ENCODE measurements at regions of chr20 and their contacts with region 1.

Region 1: GRCh38 chr20:35711588-35712209 is 12.5 kb downstream of the ROMO1 start:
- DNase-seq: no peak
- H3K4me3 ChIP-seq: no peak overlapping the region
- H3K27ac ChIP-seq: no peak overlapping the region
- H3K27me3 ChIP-seq: no peaks in the 10 kb centered on the region
- CTCF ChIP-seq: no peak

Region 2: GRCh38 chr20:35750611-35751010 is 38.9 kb after region 1 on chr20:
- CTCF ChIA-PET with region 1: interaction called, 10 read pairs
- POLR2A ChIA-PET with region 1: no interaction called
- DNase-seq: no peak
- H3K4me3 ChIP-seq: no peak overlapping the region
- H3K27ac ChIP-seq: no peak overlapping the region
- H3K27me3 ChIP-seq: peaks cover 11% of the 10 kb centered on the region
- CTCF ChIP-seq: no peak

Region 3: GRCh38 chr20:35768731-35769664 is 57.3 kb after region 1 on chr20:
- CTCF ChIA-PET with region 1: no interaction called
- POLR2A ChIA-PET with region 1: no interaction called
- DNase-seq: peak; percentile 94
- H3K4me3 ChIP-seq: no peak overlapping the region
- H3K27ac ChIP-seq: peak overlapping the region; percentile 97
- H3K27me3 ChIP-seq: no peaks in the 10 kb centered on the region
- CTCF ChIP-seq: no peak

Region 4: GRCh38 chr20:36145877-36146707 is 434.4 kb after region 1 on chr20:
- CTCF ChIA-PET with region 1: no interaction called
- POLR2A ChIA-PET with region 1: interaction called, 19 read pairs
- DNase-seq: no peak
- H3K4me3 ChIP-seq: no peak overlapping the region
- H3K27ac ChIP-seq: peak overlapping the region; percentile 21
- H3K27me3 ChIP-seq: peaks cover 17% of the 10 kb centered on the region
- CTCF ChIP-seq: no peak